ENCODE measurements at regions of chr17 and their contacts with region 1.

Region 1: GRCh38 chr17:3636154-3636907 is at the starts of genes CTNS and SHPK:
- DNase-seq: peak; percentile 97
- ATAC-seq: peak; percentile 97
- H3K4me3 ChIP-seq: peak within 1 kb of the TSS; percentile 48 to 80 (median 76)
- H3K4me3 Mint-ChIP-seq: peak within 1 kb of the TSS; percentile 99
- H3K27ac ChIP-seq: peak within 1 kb of the TSS; percentile 90 to 97
- H3K27ac Mint-ChIP-seq: peak within 1 kb of the TSS; percentile 100
- H3K4me1 ChIP-seq: peaks cover 4 to 15% of the 10 kb centered on the region in 2 donors
- H3K4me1 Mint-ChIP-seq: peaks cover 34% of the 10 kb centered on the region
- H3K27me3 ChIP-seq: no peaks in the 10 kb centered on the region
- H3K27me3 Mint-ChIP-seq: no peaks in the 10 kb centered on the region
- CTCF ChIP-seq: no peak
- total RNA-seq, gene CTNS: 23.1 and 24.7 TPM in 2 replicates
- total RNA-seq, gene SHPK: 16.1 and 17.5 TPM in 2 replicates

Region 2: DNA sequence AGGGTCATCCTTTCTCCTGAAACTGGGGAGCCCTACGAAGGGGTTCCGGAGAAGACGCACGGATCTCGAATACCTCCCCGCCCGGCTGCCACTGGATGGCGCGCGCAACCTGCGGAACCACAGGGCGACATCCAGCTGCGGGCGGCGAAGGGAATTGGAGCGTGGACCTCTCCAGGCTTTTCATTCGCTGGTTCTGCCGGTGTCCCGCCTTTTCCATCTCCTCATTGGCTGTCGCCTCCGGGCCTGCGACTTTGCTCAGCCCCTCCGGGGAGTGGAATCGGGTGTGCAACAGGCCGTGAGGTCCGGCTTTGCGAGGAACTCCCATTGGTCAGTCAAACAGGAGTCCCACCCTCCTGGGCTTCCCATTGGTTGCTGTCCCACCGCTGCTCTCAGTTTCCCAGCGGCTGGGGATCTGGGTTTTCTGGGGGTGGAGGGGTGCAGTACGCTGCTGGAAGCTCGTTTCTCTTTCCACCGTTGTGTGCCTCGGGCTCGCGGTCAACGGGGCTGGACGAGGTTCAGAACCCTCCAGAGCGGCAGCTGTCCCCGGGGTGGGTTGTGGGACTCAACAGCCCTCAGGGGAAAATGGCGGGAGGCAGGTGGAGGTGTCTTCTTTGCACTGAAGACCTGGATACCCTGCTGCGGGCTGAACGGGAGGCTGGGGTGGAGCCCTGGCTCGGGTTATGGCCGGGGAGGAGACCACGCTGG is 587.4 kb before region 1 on chr17:
- CTCF ChIA-PET with region 1: interaction called, 14 read pairs
- POLR2A ChIA-PET with region 1: interaction called, 4 read pairs
- intact Hi-C with region 1: loop called (anchors 2 kb)
- DNase-seq: peak; percentile 96
- ATAC-seq: peak; percentile 97
- H3K4me3 ChIP-seq: peak overlapping the region; percentile 36 to 84 (median 76)
- H3K4me3 Mint-ChIP-seq: peak overlapping the region; percentile 93
- H3K27ac ChIP-seq: peak overlapping the region in 1 of 2 donors; percentile 7
- H3K27ac Mint-ChIP-seq: peak overlapping the region; percentile 86
- H3K4me1 ChIP-seq: peaks cover 6 to 13% of the 10 kb centered on the region in 2 donors
- H3K4me1 Mint-ChIP-seq: peaks cover 7% of the 10 kb centered on the region
- H3K27me3 ChIP-seq: peaks cover 0 to under 1% (median 0%) of the 10 kb centered on the region in 4 experiments
- H3K27me3 Mint-ChIP-seq: no peaks in the 10 kb centered on the region
- CTCF ChIP-seq: peak; percentile 76

Region 3: GRCh38 chr17:3558603-3559269 is 77.6 kb before region 1 on chr17:
- CTCF ChIA-PET with region 1: interaction called, 5 read pairs
- POLR2A ChIA-PET with region 1: interaction called, 3 read pairs
- intact Hi-C with region 1: loop called (anchors 1 kb)
- DNase-seq: peak; percentile 89
- ATAC-seq: peak; percentile 76
- H3K4me3 ChIP-seq: no peak overlapping the region
- H3K4me3 Mint-ChIP-seq: peak overlapping the region; percentile 77
- H3K27ac ChIP-seq: peak overlapping the region; percentile 73 to 81
- H3K27ac Mint-ChIP-seq: peak overlapping the region; percentile 95
- H3K4me1 ChIP-seq: peaks cover 28 to 40% of the 10 kb centered on the region in 2 donors
- H3K4me1 Mint-ChIP-seq: peaks cover 46% of the 10 kb centered on the region
- H3K27me3 ChIP-seq: peaks cover 0 to 9% (median 0%) of the 10 kb centered on the region in 4 experiments
- H3K27me3 Mint-ChIP-seq: peaks cover 3% of the 10 kb centered on the region
- CTCF ChIP-seq: no peak

Region 4: DNA sequence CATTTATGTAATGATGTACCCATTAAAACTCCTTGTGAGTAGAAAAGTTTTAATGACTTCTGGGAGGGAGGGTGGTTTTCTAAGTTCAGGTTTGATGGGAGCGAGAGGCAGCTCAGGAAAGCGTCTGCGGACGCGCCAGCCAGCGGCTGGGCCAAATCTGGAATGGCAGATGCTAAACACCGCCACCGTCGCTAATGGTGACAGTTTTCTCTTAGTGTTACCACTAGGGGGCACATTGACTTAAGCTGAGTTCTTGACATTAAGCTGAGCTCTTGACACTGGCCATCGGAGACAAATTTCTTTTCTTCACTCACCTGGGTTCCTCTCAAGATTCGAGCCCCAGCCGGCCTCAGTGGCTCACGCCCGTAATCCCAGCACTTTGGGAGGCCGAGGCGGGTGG is 33.8 kb before region 1 on chr17:
- CTCF ChIA-PET with region 1: interaction called, 10 read pairs
- POLR2A ChIA-PET with region 1: no interaction called
- intact Hi-C with region 1: no loop called
- DNase-seq: peak; percentile 58
- ATAC-seq: peak; percentile 60
- H3K4me3 ChIP-seq: no peak overlapping the region
- H3K4me3 Mint-ChIP-seq: no peak overlapping the region
- H3K27ac ChIP-seq: no peak overlapping the region
- H3K27ac Mint-ChIP-seq: no peak overlapping the region
- H3K4me1 ChIP-seq: no peaks in the 10 kb centered on the region
- H3K4me1 Mint-ChIP-seq: peaks cover 2% of the 10 kb centered on the region
- H3K27me3 ChIP-seq: no peaks in the 10 kb centered on the region
- H3K27me3 Mint-ChIP-seq: no peaks in the 10 kb centered on the region
- CTCF ChIP-seq: peak; percentile 43

Region 5: GRCh38 chr17:3647769-3648555 is 11.6 kb after region 1 on chr17:
- CTCF ChIA-PET with region 1: interaction called, 9 read pairs
- POLR2A ChIA-PET with region 1: interaction called, 6 read pairs
- intact Hi-C with region 1: loop called (anchors 1 kb)
- DNase-seq: peak; percentile 55
- ATAC-seq: no peak
- H3K4me3 ChIP-seq: no peak overlapping the region
- H3K4me3 Mint-ChIP-seq: no peak overlapping the region
- H3K27ac ChIP-seq: no peak overlapping the region
- H3K27ac Mint-ChIP-seq: peak overlapping the region; percentile 15
- H3K4me1 ChIP-seq: peaks cover 20 to 28% of the 10 kb centered on the region in 2 donors
- H3K4me1 Mint-ChIP-seq: peaks cover 27% of the 10 kb centered on the region
- H3K27me3 ChIP-seq: no peaks in the 10 kb centered on the region
- H3K27me3 Mint-ChIP-seq: no peaks in the 10 kb centered on the region
- CTCF ChIP-seq: peak; percentile 39

Region 6: GRCh38 chr17:3668279-3669085 is 32.2 kb after region 1 on chr17 and contains the starts of genes EMC6 and TAX1BP3:
- CTCF ChIA-PET with region 1: no interaction called
- POLR2A ChIA-PET with region 1: interaction called, 9 read pairs
- intact Hi-C with region 1: loop called (anchors 1 kb)
- DNase-seq: peak; percentile 99
- ATAC-seq: peak; percentile 90
- H3K4me3 ChIP-seq: peak within 1 kb of the TSS; percentile 60 to 99 (median 98)
- H3K4me3 Mint-ChIP-seq: peak within 1 kb of the TSS; percentile 96
- H3K27ac ChIP-seq: peak within 1 kb of the TSS; percentile 74 to 86
- H3K27ac Mint-ChIP-seq: peak within 1 kb of the TSS; percentile 94
- H3K4me1 ChIP-seq: peaks cover 11 to 21% of the 10 kb centered on the region in 2 donors
- H3K4me1 Mint-ChIP-seq: peaks cover 33% of the 10 kb centered on the region
- H3K27me3 ChIP-seq: no peaks in the 10 kb centered on the region
- H3K27me3 Mint-ChIP-seq: no peaks in the 10 kb centered on the region
- CTCF ChIP-seq: no peak
- total RNA-seq, gene EMC6: 23.4 and 26.6 TPM in 2 replicates
- total RNA-seq, gene TAX1BP3: 17.1 and 17.7 TPM in 2 replicates

Region 7: DNA sequence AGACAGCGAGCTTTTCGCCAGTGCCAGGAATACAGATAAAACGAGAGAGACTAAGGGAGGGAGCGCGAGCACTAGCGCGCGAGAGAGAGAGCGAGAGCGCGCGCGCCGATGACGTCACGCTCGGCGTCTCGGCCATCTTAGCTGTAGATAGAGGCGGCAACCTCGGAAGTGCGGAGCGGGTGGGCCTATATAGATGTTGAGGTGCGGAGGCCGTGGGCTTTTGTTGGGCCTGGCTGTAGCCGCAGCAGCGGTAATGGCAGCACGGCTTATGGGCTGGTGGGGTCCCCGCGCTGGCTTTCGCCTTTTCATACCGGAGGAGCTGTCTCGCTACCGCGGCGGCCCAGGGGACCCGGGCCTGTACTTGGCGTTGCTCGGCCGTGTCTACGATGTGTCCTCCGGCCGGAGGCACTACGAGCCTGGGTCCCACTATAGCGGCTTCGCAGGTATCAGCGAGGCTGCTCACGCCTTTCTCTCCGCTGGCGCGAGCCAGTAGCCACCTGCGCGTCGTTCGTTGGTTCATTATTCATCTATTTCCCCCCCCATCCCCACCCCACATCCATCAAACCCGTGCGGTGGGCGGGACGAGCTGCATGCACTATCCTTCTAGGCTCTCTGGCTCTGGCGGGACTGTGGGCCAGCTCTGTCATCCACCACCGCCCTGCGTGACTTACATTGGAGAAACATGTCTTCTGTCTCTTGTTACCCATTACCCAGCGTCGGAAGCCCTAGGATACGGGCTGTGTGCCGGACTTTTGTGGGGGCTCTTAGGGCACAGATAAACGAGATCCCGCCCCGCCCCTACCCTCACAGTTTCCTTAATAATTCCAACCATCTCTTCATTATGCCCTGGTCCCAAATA is 507.5 kb after region 1 on chr17:
- CTCF ChIA-PET with region 1: no interaction called
- POLR2A ChIA-PET with region 1: interaction called, 5 read pairs
- intact Hi-C with region 1: loop called (anchors 1 kb)
- DNase-seq: peak; percentile 97
- ATAC-seq: peak; percentile 69
- H3K4me3 ChIP-seq: peak overlapping the region; percentile 65 to 95 (median 93)
- H3K4me3 Mint-ChIP-seq: peak overlapping the region; percentile 94
- H3K27ac ChIP-seq: peak overlapping the region; percentile 98 to 99
- H3K27ac Mint-ChIP-seq: peak overlapping the region; percentile 100
- H3K4me1 ChIP-seq: peaks cover 22 to 26% of the 10 kb centered on the region in 2 donors
- H3K4me1 Mint-ChIP-seq: peaks cover 39% of the 10 kb centered on the region
- H3K27me3 ChIP-seq: no peaks in the 10 kb centered on the region
- H3K27me3 Mint-ChIP-seq: no peaks in the 10 kb centered on the region
- CTCF ChIP-seq: no peak